GM12878 (cell line): ENCODE measurements at regions of chr3 and their contacts with region 1.

Region 1: DNA sequence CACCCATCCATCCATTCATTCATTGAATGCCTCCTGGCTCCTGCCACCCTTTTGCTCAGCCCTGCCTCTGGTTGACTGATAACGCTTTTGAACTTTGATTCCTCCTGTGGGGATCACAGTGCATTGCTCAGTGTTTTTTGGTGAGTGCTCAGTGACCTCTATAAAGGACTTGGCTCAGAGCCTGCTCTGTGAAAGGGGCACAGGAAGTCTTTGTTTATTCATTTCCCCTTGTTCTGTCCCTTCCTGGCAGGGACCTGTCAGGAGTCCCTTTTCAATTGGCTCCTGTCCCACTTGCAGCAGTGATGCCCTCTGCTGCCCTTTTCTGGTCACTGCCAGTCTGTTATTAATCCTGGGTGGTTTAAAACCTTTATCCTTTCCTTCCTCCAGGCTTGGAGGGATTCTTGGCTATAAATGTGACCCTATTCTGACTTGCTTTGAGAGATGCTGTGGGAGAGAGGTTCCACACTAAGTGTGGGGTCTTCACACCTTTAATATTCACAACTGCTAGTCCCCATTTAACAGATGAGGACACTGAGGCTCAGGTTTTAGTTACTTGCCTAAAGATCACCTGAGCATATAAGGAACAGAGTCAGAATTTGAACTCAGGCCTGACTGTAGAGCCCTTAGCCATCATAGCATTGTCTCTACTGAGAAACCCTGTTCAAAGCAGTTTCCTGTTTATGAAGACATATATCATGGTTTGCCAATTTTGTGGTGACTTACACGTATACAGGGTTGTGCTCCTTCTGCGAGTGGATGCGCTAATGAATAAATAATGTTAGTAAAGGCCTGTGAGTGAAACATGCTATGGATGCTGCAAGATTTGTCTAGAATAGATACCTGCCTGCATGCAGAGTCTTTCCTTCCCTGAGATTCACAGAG is 23.2 kb upstream of the TATDN2 start:
- DNase-seq: no peak
- ATAC-seq: peak; percentile 66
- H3K4me3 ChIP-seq: no peak overlapping the region
- H3K27ac ChIP-seq: peak overlapping the region; percentile 31
- H3K4me1 ChIP-seq: peaks cover 62% of the 10 kb centered on the region
- H3K27me3 ChIP-seq: no peaks in the 10 kb centered on the region
- CTCF ChIP-seq: peak; percentile 73 to 89 (median 87)
- EP300 ChIP-seq: no peak
- POLR2A ChIP-seq: no peak
- RAD21 ChIP-seq: peak; percentile 96

Region 2: DNA sequence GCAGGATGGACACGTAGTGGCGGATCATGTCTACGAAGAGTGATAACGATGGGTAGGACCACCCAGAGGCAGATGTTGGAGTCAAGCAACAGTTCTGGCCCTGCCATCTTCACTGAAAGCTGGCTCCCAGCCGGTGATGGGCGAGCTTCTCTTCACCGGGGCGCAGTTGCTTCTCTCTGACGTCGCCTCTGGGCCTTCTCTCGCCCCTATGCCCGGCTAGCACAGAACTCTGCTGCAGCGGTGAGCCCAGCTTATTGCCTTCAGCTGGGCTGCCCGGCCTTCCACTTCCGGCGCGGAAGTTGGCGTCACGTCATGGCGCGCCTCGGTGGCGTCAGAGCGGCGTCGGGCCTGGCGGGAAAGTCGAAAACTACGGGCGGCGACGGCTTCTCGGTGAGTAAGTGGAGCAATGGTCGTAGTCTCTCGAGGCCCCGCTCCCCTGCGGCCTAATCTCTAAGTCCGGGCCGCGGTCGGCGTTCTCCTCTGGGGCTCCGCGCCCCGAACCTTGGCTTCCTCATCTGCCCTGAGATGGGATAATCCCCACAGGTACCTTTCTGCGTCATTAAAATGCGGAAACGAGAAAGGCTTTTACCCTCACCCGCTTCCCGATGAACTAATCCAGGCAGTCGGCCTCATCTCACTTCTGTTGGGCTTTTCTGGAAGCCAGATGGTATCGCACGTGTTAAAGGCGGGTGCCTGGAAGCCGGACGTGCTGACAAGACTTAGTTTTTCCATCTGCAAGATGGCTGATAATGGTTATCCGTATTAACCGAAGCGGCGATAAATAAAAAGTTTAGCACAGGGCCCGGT is 198.7 kb before region 1 on chr3 and contains the start of gene FANCD2:
- CTCF ChIA-PET with region 1: no interaction called
- POLR2A ChIA-PET with region 1: interaction called, 3 read pairs
- RAD21 ChIA-PET with region 1: no interaction called
- SMC1A ChIA-PET with region 1: no interaction called
- in situ Hi-C with region 1: no loop called
- intact Hi-C with region 1: loop called (anchors 2 kb)
- DNase-seq: peak; percentile 60
- ATAC-seq: peak; percentile 94
- H3K4me3 ChIP-seq: peak within 1 kb of the TSS; percentile 89
- H3K27ac ChIP-seq: peak within 1 kb of the TSS; percentile 96
- H3K4me1 ChIP-seq: no peaks in the 10 kb centered on the region
- H3K27me3 ChIP-seq: no peaks in the 10 kb centered on the region
- CTCF ChIP-seq: no peak
- EP300 ChIP-seq: peak in 1 of 2 experiments; percentile 28; a peak in 1 of 4 replicates
- POLR2A ChIP-seq: peak; percentile 92
- RAD21 ChIP-seq: no peak
- polyA plus RNA-seq, gene FANCD2: 37.9 to 61.5 TPM

Region 3: DNA sequence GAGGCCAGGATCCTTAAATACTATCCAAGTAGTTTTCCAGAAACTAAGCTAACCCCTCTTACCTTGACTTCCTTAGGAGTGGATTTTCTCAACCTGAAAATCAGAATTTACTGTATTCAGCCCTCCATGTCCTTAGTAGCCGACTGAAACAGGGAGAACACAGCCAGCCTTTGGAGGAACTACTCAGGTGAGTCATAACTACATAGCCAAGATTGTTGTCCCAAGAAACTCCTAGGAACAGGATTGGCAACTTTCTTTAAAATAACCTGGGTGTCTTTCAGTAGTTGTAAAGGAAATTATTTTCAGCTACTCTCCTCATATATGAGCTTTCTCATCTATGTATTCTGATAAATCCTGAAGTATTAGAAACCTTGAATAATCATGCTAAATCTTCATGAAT is 139.3 kb before region 1 on chr3:
- CTCF ChIA-PET with region 1: no interaction called
- POLR2A ChIA-PET with region 1: no interaction called
- RAD21 ChIA-PET with region 1: no interaction called
- SMC1A ChIA-PET with region 1: no interaction called
- in situ Hi-C with region 1: no loop called
- intact Hi-C with region 1: no loop called
- DNase-seq: no peak
- ATAC-seq: no peak
- H3K4me3 ChIP-seq: no peak overlapping the region
- H3K27ac ChIP-seq: no peak overlapping the region
- H3K4me1 ChIP-seq: no peaks in the 10 kb centered on the region
- H3K27me3 ChIP-seq: no peaks in the 10 kb centered on the region
- CTCF ChIP-seq: no peak
- EP300 ChIP-seq: no peak
- POLR2A ChIP-seq: no peak
- RAD21 ChIP-seq: no peak

Region 4: GRCh38 chr3:10142707-10143566 is 82.1 kb before region 1 on chr3:
- CTCF ChIA-PET with region 1: interaction called, 3 read pairs
- POLR2A ChIA-PET with region 1: interaction called, 9 read pairs
- RAD21 ChIA-PET with region 1: interaction called, 9 read pairs
- SMC1A ChIA-PET with region 1: interaction called, 6 read pairs
- in situ Hi-C with region 1: no loop called
- intact Hi-C with region 1: loop called (anchors 2 kb)
- DNase-seq: no peak
- ATAC-seq: peak; percentile 21
- H3K4me3 ChIP-seq: peak overlapping the region; percentile 100
- H3K27ac ChIP-seq: peak overlapping the region; percentile 61; the same call in 1 of the 2 replicates
- H3K4me1 ChIP-seq: no peaks in the 10 kb centered on the region; the same call in 1 of the 2 replicates
- H3K27me3 ChIP-seq: no peaks in the 10 kb centered on the region
- CTCF ChIP-seq: no peak
- EP300 ChIP-seq: no peak
- POLR2A ChIP-seq: no peak; the same call in 1 of the 2 replicates
- RAD21 ChIP-seq: no peak

Region 5: DNA sequence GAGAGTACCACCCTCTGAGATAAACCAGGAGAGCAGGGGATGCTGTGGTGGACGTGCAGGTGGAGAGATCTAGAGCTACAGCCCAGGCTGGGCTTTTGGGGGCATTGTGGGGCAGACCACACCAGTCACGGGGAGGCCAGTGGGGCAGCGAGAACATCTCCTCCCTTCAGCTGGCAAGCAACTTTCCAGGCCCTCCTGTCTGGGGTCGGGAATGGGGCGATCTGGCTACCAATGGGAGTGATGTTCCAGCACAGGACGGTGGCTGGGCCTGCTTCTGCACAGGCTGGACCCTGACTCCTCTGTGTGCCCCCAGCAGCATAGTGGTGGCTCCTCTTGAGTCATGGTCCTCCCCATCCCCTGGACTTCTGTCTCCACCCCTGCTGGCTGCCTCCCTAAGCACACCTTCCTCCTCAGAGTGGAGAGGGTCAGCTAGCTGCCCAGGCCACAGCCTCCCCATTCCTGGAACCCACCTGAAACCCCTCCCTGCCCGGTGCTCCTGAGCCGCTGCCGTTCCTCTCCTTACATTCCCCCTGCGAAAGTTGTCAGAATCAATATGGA is 44.2 kb before region 1 on chr3:
- CTCF ChIA-PET with region 1: interaction called, 3 read pairs
- POLR2A ChIA-PET with region 1: interaction called, 4 read pairs
- RAD21 ChIA-PET with region 1: interaction called, 4 read pairs
- SMC1A ChIA-PET with region 1: interaction called, 4 read pairs
- in situ Hi-C with region 1: no loop called
- intact Hi-C with region 1: loop called (anchors 5 kb)
- DNase-seq: no peak
- ATAC-seq: peak; percentile 26
- H3K4me3 ChIP-seq: no peak overlapping the region
- H3K27ac ChIP-seq: peak overlapping the region; percentile 66
- H3K4me1 ChIP-seq: peaks cover 17% of the 10 kb centered on the region
- H3K27me3 ChIP-seq: no peaks in the 10 kb centered on the region
- CTCF ChIP-seq: no peak
- EP300 ChIP-seq: no peak
- POLR2A ChIP-seq: no peak
- RAD21 ChIP-seq: no peak

Region 6: DNA sequence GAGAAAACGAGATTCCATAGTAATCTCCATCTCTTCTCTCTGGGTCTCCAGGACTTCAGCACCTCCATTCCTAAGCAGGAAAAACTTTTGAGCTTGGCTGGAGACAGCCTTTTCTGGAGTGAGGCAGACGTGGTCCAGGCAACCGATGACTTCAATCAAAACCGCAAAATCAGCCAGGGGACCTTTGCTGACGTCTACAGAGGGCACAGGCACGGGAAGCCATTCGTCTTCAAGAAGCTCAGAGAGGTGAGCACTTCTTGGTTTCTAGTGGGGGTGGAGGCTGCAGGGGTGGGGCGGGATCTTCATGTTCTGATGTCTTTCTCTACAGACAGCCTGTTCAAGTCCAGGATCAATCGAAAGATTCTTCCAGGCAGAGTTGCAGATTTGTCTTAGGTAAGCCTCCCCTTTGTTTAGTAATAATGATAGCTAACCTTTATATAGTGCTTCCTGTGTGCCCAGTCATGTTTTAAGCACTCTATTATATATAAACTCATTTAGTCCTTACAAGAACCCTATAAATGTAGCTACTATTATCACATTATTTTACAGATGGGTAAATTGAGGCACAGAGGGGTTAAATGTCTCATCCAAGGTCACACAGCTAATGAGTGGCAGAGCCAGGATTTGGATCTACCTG is 11.8 kb before region 1 on chr3:
- CTCF ChIA-PET with region 1: interaction called, 9 read pairs
- POLR2A ChIA-PET with region 1: interaction called, 5 read pairs
- RAD21 ChIA-PET with region 1: interaction called, 3 read pairs
- SMC1A ChIA-PET with region 1: interaction called, 15 read pairs
- in situ Hi-C with region 1: no loop called
- intact Hi-C with region 1: no loop called
- DNase-seq: no peak
- ATAC-seq: peak; percentile 95
- H3K4me3 ChIP-seq: no peak overlapping the region
- H3K27ac ChIP-seq: no peak overlapping the region
- H3K4me1 ChIP-seq: no peaks in the 10 kb centered on the region
- H3K27me3 ChIP-seq: no peaks in the 10 kb centered on the region
- CTCF ChIP-seq: no peak
- EP300 ChIP-seq: 0 out of 4 replicates have a peak, but pooled peaks of 1 of the 2 experiments have one; percentile 20
- POLR2A ChIP-seq: no peak
- RAD21 ChIP-seq: no peak

Region 7: GRCh38 chr3:10417849-10418248 is 192.8 kb after region 1 on chr3:
- CTCF ChIA-PET with region 1: no interaction called
- POLR2A ChIA-PET with region 1: no interaction called
- RAD21 ChIA-PET with region 1: no interaction called
- SMC1A ChIA-PET with region 1: no interaction called
- in situ Hi-C with region 1: no loop called
- intact Hi-C with region 1: no loop called
- DNase-seq: no peak
- ATAC-seq: peak; percentile 54
- H3K4me3 ChIP-seq: no peak overlapping the region
- H3K27ac ChIP-seq: no peak overlapping the region
- H3K4me1 ChIP-seq: no peaks in the 10 kb centered on the region; the same call in 1 of the 2 replicates
- H3K27me3 ChIP-seq: peaks cover 0 to 4% of the 10 kb centered on the region in 2 experiments; a peak in 3 of 4 replicates
- CTCF ChIP-seq: peak; percentile 32 to 37 (median 33); a peak in 4 of 6 replicates
- EP300 ChIP-seq: no peak
- POLR2A ChIP-seq: no peak
- RAD21 ChIP-seq: peak; percentile 73